Panc1 (cell line): ENCODE measurements at regions of chr4 and their contacts with region 1.

Region 1: GRCh38 chr4:73446336-73446938 is 10.4 kb downstream of the AFP start:
- DNase-seq: no peak
- ATAC-seq: peak; percentile 79
- H3K4me3 ChIP-seq: no peak overlapping the region
- H3K27ac ChIP-seq: no peak overlapping the region
- H3K4me1 ChIP-seq: no peaks in the 10 kb centered on the region
- H3K27me3 ChIP-seq: peaks cover 5% of the 10 kb centered on the region
- CTCF ChIP-seq: peak; percentile 75

Region 2: DNA sequence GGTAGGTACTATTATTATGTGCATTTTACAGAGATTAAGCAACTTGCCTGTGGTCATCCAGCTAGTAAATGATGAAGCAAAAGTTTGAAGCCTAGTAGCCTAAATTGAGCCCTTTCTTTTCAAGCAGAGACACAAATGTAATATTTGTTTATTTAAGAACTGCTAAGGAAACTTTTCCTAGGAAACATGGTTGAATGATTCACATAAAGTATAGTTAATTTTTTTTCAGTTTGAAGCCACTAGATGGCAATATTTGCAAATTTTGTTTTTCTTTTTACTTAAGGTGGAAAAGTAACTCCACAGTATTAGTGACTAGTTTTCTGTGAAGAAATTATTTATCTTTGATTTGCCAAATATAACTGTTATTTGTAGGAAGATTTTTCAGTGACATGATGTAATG is 135.0 kb before region 1 on chr4:
- CTCF ChIA-PET with region 1: no interaction called
- POLR2A ChIA-PET with region 1: no interaction called
- in situ Hi-C with region 1: no loop called
- intact Hi-C with region 1: loop called (anchors 10 kb)
- DNase-seq: no peak
- ATAC-seq: no peak
- H3K4me3 ChIP-seq: no peak overlapping the region
- H3K27ac ChIP-seq: no peak overlapping the region
- H3K4me1 ChIP-seq: no peaks in the 10 kb centered on the region
- H3K27me3 ChIP-seq: no peaks in the 10 kb centered on the region
- CTCF ChIP-seq: peak; percentile 34; the same call in 1 of the 2 replicates

Region 3: GRCh38 chr4:73341454-73341853 is 105.0 kb before region 1 on chr4:
- CTCF ChIA-PET with region 1: interaction called, 9 read pairs
- POLR2A ChIA-PET with region 1: no interaction called
- in situ Hi-C with region 1: no loop called
- intact Hi-C with region 1: loop called (anchors 1 kb)
- DNase-seq: peak; percentile 35
- ATAC-seq: peak; percentile 79; the same call in 1 of the 2 replicates
- H3K4me3 ChIP-seq: no peak overlapping the region
- H3K27ac ChIP-seq: no peak overlapping the region
- H3K4me1 ChIP-seq: no peaks in the 10 kb centered on the region
- H3K27me3 ChIP-seq: no peaks in the 10 kb centered on the region
- CTCF ChIP-seq: peak; percentile 64